Activated T-helper 1 cell treated with anti-CD3 and anti-CD28 coated beads, Interleukin-12 subunit alpha, Interleukin-12 subunit beta, Interleukin-2, Interleukin-4 antibody, amounts not matched to agents 30 ng/mL and 10 ng/mL and 1 ng/mL, durations not matched to agents 14 hours and 24 hours and 36 hours (primary cell): ENCODE measurements at regions of chr7 and their contacts with region 1.

Region 1: GRCh38 chr7:48109848-48110663 is 21.0 kb downstream of the UPP1 start:
- DNase-seq: peak; percentile 75
- H3K4me3 Mint-ChIP-seq: no peak overlapping the region
- H3K27ac Mint-ChIP-seq: no peak overlapping the region
- H3K4me1 Mint-ChIP-seq: peaks cover 23% of the 10 kb centered on the region
- H3K27me3 Mint-ChIP-seq: no peaks in the 10 kb centered on the region

Region 2: GRCh38 chr7:47968847-47969774 is 140.9 kb before region 1 on chr7:
- intact Hi-C with region 1: loop called (anchors 1 kb)
- DNase-seq: peak; percentile 26
- H3K4me3 Mint-ChIP-seq: no peak overlapping the region
- H3K27ac Mint-ChIP-seq: no peak overlapping the region
- H3K4me1 Mint-ChIP-seq: peaks cover 13% of the 10 kb centered on the region
- H3K27me3 Mint-ChIP-seq: no peaks in the 10 kb centered on the region

Region 3: GRCh38 chr7:47991741-47992311 is 118.2 kb before region 1 on chr7:
- intact Hi-C with region 1: loop called (anchors 1 kb)
- DNase-seq: peak; percentile 80
- H3K4me3 Mint-ChIP-seq: peak overlapping the region; percentile 80
- H3K27ac Mint-ChIP-seq: peak overlapping the region; percentile 80
- H3K4me1 Mint-ChIP-seq: peaks cover 17% of the 10 kb centered on the region
- H3K27me3 Mint-ChIP-seq: peaks cover 6% of the 10 kb centered on the region

Region 4: GRCh38 chr7:48088559-48089045 is 21.5 kb before region 1 on chr7:
- intact Hi-C with region 1: loop called (anchors 1 kb)
- DNase-seq: peak; percentile 87
- H3K4me3 Mint-ChIP-seq: peak overlapping the region; percentile 87
- H3K27ac Mint-ChIP-seq: peak overlapping the region; percentile 96
- H3K4me1 Mint-ChIP-seq: peaks cover 82% of the 10 kb centered on the region
- H3K27me3 Mint-ChIP-seq: no peaks in the 10 kb centered on the region

Region 5: DNA sequence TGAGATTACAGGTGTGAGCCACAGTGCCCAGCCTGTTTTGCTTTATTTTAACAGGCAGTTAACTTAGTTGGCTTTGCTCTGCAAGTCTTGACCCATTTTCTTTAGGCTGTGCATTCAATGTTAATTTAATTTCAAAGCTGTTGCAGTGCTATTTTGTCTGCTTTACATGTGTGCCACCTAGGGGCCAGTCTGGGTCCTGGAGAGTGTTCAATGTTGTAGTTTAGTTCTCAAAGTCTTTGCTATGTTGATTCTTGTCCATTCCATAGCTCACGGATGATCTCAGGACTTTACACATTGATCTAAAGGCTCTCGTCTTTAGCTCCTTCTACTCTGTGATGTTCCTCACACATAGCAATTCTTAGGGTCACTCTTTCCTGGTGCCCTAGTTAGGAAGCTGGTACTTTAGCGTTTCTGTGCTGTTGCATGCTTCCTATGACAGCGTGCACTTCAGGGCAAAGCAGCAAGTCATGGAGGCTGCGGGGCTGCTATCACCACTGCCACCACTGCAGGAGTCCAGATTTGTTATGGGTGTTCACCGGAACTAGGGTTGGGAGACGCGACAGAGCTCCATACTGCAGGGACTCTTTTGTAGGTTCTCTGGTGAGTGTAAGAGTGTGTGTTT is 44.8 kb after region 1 on chr7:
- intact Hi-C with region 1: loop called (anchors 1 kb)
- DNase-seq: peak; percentile 17
- H3K4me3 Mint-ChIP-seq: no peak overlapping the region
- H3K27ac Mint-ChIP-seq: no peak overlapping the region
- H3K4me1 Mint-ChIP-seq: no peaks in the 10 kb centered on the region
- H3K27me3 Mint-ChIP-seq: peaks cover 27% of the 10 kb centered on the region